ENCODE measurements at regions of chr1 and their contacts with region 1.

Region 1: GRCh38 chr1:31938174-31938950 is at the start of gene PTP4A2:
- DNase-seq: peak; percentile 97
- H3K4me3 Mint-ChIP-seq: peak within 1 kb of the TSS; percentile 96
- H3K27ac Mint-ChIP-seq: peak within 1 kb of the TSS; percentile 97
- H3K4me1 Mint-ChIP-seq: peaks cover 38% of the 10 kb centered on the region
- H3K27me3 Mint-ChIP-seq: no peaks in the 10 kb centered on the region
- CTCF ChIP-seq: peak; percentile 35
- total RNA-seq, gene PTP4A2: 196 and 220 TPM in 2 replicates

Region 2: GRCh38 chr1:31715087-31715872 is 223.1 kb before region 1 on chr1:
- CTCF ChIA-PET with region 1: no interaction called
- POLR2A ChIA-PET with region 1: no interaction called
- intact Hi-C with region 1: no loop called
- DNase-seq: peak; percentile 61
- H3K4me3 Mint-ChIP-seq: no peak overlapping the region
- H3K27ac Mint-ChIP-seq: no peak overlapping the region
- H3K4me1 Mint-ChIP-seq: peaks cover 32% of the 10 kb centered on the region
- H3K27me3 Mint-ChIP-seq: peaks cover 13% of the 10 kb centered on the region
- CTCF ChIP-seq: peak; percentile 55

Region 3: GRCh38 chr1:31897526-31898100 is 40.7 kb before region 1 on chr1:
- CTCF ChIA-PET with region 1: interaction called, 3 read pairs
- POLR2A ChIA-PET with region 1: interaction called, 30 read pairs
- intact Hi-C with region 1: no loop called
- DNase-seq: no peak
- H3K4me3 Mint-ChIP-seq: no peak overlapping the region
- H3K27ac Mint-ChIP-seq: peak overlapping the region; percentile 57
- H3K4me1 Mint-ChIP-seq: peaks cover 11% of the 10 kb centered on the region
- H3K27me3 Mint-ChIP-seq: no peaks in the 10 kb centered on the region
- CTCF ChIP-seq: no peak

Region 4: GRCh38 chr1:31910933-31911332 is 27.4 kb before region 1 on chr1:
- CTCF ChIA-PET with region 1: interaction called, 4 read pairs
- POLR2A ChIA-PET with region 1: interaction called, 43 read pairs
- intact Hi-C with region 1: no loop called
- DNase-seq: peak; percentile 48
- H3K4me3 Mint-ChIP-seq: no peak overlapping the region
- H3K27ac Mint-ChIP-seq: peak overlapping the region; percentile 66
- H3K4me1 Mint-ChIP-seq: peaks cover 6% of the 10 kb centered on the region
- H3K27me3 Mint-ChIP-seq: no peaks in the 10 kb centered on the region
- CTCF ChIP-seq: no peak

Region 5: GRCh38 chr1:31955917-31956736 is 17.8 kb after region 1 on chr1:
- CTCF ChIA-PET with region 1: interaction called, 120 read pairs
- POLR2A ChIA-PET with region 1: interaction called, 409 read pairs
- intact Hi-C with region 1: loop called (anchors 2 kb)
- DNase-seq: peak; percentile 99
- H3K4me3 Mint-ChIP-seq: peak overlapping the region; percentile 39
- H3K27ac Mint-ChIP-seq: peak overlapping the region; percentile 100
- H3K4me1 Mint-ChIP-seq: peaks cover 35% of the 10 kb centered on the region
- H3K27me3 Mint-ChIP-seq: no peaks in the 10 kb centered on the region
- CTCF ChIP-seq: no peak

Region 6: GRCh38 chr1:31970873-31971272 is 32.5 kb after region 1 on chr1:
- CTCF ChIA-PET with region 1: interaction called, 77 read pairs
- POLR2A ChIA-PET with region 1: interaction called, 70 read pairs
- intact Hi-C with region 1: no loop called
- DNase-seq: no peak
- H3K4me3 Mint-ChIP-seq: no peak overlapping the region
- H3K27ac Mint-ChIP-seq: no peak overlapping the region
- H3K4me1 Mint-ChIP-seq: no peaks in the 10 kb centered on the region
- H3K27me3 Mint-ChIP-seq: no peaks in the 10 kb centered on the region
- CTCF ChIP-seq: no peak